HEK293 (cell line): ENCODE measurements at regions of chr17 and their contacts with region 1.

Region 1: GRCh38 chr17:72120642-72121163 is at the start of gene SOX9:
- H3K4me3 ChIP-seq: peak within 1 kb of the TSS; percentile 89
- H3K27ac ChIP-seq: peak within 1 kb of the TSS; percentile 95
- H3K4me1 ChIP-seq: peaks cover 17% of the 10 kb centered on the region
- CTCF ChIP-seq: no peak

Region 2: GRCh38 chr17:71472809-71473789 is 647.6 kb before region 1 on chr17:
- CTCF ChIA-PET with region 1: interaction called, 5 read pairs
- POLR2A ChIA-PET with region 1: interaction called, 12 read pairs
- H3K4me3 ChIP-seq: no peak overlapping the region
- H3K27ac ChIP-seq: no peak overlapping the region
- H3K4me1 ChIP-seq: no peaks in the 10 kb centered on the region; the same call in 1 of the 2 replicates
- CTCF ChIP-seq: peak; percentile 55; the same call in 1 of the 2 replicates

Region 3: DNA sequence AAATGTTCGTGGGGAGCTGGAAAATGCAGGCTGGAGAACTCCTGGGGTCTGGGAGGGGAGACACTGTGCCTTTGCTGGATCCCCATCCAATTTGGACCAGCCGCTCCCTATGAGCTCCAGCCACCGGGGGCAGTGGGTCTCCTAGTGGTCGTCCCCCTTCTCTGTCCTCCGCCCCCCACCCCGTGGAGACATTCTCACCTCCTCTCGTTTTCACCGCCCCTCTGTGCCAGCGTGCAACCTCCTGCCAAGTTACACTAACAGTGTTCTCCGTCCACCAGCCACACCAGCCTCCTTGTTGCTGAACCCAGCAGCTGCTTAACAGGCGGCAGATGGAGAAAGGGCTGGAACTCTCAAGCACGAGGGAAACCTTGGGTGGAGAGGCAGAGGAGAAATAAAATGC is 67.3 kb before region 1 on chr17:
- CTCF ChIA-PET with region 1: no interaction called
- POLR2A ChIA-PET with region 1: no interaction called
- H3K4me3 ChIP-seq: no peak overlapping the region
- H3K27ac ChIP-seq: no peak overlapping the region
- H3K4me1 ChIP-seq: no peaks in the 10 kb centered on the region
- CTCF ChIP-seq: no peak

Region 4: DNA sequence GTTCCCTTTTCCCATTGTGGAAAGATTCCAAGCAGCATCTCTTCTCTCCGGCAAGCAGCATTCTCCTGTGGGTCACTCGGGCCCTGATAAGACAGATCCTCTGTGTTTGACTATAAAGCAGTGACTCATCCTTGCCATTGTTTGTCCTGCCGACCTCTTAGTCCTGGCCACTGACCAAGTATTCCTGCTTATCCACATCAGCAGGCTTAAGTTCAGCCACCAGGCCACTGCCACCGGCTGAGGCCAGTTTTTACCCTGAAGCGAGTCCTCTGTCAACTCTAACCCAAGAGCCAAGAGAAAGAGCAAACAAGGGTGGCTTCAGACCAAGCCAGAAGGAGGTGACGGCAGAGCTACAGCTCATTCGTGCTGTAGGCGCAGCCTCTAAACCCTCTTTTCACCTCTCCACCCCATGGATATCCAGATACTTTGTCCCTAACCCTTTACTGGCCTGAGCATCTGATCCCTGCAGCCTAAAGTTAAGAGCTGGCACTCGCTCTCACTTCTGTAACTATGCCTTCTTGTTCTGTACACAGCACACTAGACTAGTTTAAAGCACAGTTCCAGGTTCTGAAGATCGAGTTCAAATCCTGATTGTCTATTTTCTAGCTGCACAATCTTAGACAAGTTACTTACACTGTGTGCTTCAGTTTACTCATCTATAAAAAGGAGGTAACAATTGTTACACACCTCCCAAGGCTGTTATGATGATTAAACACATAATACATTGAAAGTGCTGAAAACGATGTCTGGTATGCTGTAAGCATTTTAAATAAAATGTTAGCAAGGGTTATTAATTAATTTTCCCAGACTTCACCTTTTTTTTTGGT is 31.1 kb after region 1 on chr17:
- CTCF ChIA-PET with region 1: no interaction called
- POLR2A ChIA-PET with region 1: interaction called, 10 read pairs
- H3K4me3 ChIP-seq: no peak overlapping the region
- H3K27ac ChIP-seq: no peak overlapping the region
- H3K4me1 ChIP-seq: no peaks in the 10 kb centered on the region; the same call in 1 of the 2 replicates
- CTCF ChIP-seq: no peak

Region 5: DNA sequence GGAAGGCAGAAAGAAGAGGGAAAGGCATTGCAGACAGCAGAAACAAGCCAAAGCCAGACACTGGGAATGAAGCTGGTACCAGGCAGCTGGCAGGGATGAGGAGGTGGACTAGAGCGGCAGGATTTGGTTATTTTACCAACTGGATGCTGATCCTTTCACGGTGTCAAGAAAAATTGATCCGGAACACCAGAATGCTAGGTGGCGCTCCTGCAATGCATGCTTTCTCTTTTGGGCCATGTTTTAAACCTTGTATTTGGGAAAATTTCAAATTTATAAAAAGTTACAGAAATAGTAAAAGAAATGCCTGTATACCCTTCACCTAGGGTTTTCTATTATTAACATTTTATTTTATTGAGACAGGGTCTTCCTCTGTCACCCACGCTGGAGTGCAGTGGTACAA is 224.8 kb after region 1 on chr17:
- CTCF ChIA-PET with region 1: no interaction called
- POLR2A ChIA-PET with region 1: interaction called, 13 read pairs
- H3K4me3 ChIP-seq: no peak overlapping the region
- H3K27ac ChIP-seq: no peak overlapping the region
- H3K4me1 ChIP-seq: no peaks in the 10 kb centered on the region
- CTCF ChIP-seq: no peak

Region 6: GRCh38 chr17:72407336-72407909 is 286.7 kb after region 1 on chr17:
- CTCF ChIA-PET with region 1: no interaction called
- POLR2A ChIA-PET with region 1: interaction called, 12 read pairs
- H3K4me3 ChIP-seq: no peak overlapping the region
- H3K27ac ChIP-seq: peak overlapping the region; percentile 42
- H3K4me1 ChIP-seq: peaks cover 8% of the 10 kb centered on the region
- CTCF ChIP-seq: no peak

Region 7: GRCh38 chr17:72539981-72540897 is 419.5 kb after region 1 on chr17:
- CTCF ChIA-PET with region 1: interaction called, 13 read pairs
- POLR2A ChIA-PET with region 1: interaction called, 45 read pairs
- H3K4me3 ChIP-seq: no peak overlapping the region
- H3K27ac ChIP-seq: peak overlapping the region; percentile 50; the same call in 1 of the 2 replicates
- H3K4me1 ChIP-seq: peaks cover 4% of the 10 kb centered on the region
- CTCF ChIP-seq: peak; percentile 88